ENCODE measurements at regions of chr14 and their contacts with region 1.

Region 1: DNA sequence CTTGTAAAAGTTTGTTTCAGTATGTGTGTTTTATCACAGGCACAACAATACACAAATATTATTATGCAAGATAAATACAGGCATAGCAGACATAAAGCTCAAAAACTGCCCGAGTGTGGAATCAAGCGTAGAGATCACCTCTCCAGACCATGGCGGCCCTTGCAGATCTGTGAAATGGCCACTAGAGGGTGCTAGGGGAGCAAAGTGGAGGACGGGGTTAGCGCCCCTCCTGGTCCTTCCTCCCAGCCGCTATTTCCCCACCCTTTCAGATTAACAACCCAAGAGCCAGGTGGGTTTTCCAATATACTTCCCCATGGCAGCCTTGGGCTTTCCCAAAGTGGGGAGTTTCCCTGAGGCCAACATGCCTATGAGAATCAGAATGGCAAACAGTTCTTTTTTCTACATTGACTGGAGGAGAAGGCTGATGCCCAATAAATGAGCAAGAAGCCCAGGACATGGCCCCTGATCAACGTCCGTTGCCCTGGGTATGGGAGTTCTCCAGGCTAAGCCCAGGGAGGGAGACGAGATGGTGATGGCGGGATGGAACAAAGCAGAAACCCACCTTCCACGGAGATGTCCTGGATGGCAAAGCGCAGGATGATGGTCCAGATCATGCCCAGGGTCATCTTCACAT is 67.4 kb downstream of the ACTN1 start:
- DNase-seq: peak; percentile 86
- ATAC-seq: peak; percentile 89
- H3K4me3 Mint-ChIP-seq: no peak overlapping the region
- H3K27ac Mint-ChIP-seq: peak overlapping the region; percentile 81
- H3K4me1 Mint-ChIP-seq: peaks cover 51% of the 10 kb centered on the region
- H3K27me3 Mint-ChIP-seq: no peaks in the 10 kb centered on the region
- CTCF ChIP-seq: peak; percentile 99

Region 2: GRCh38 chr14:68312884-68313610 is 598.7 kb before region 1 on chr14:
- CTCF ChIA-PET with region 1: no interaction called
- POLR2A ChIA-PET with region 1: no interaction called
- intact Hi-C with region 1: no loop called
- DNase-seq: peak; percentile 48
- ATAC-seq: peak; percentile 86
- H3K4me3 Mint-ChIP-seq: no peak overlapping the region
- H3K27ac Mint-ChIP-seq: no peak overlapping the region
- H3K4me1 Mint-ChIP-seq: peaks cover 23% of the 10 kb centered on the region
- H3K27me3 Mint-ChIP-seq: no peaks in the 10 kb centered on the region
- CTCF ChIP-seq: no peak

Region 3: GRCh38 chr14:68862954-68863594 is 48.6 kb before region 1 on chr14:
- CTCF ChIA-PET with region 1: interaction called, 12 read pairs
- POLR2A ChIA-PET with region 1: no interaction called
- intact Hi-C with region 1: no loop called
- DNase-seq: peak; percentile 90
- ATAC-seq: peak; percentile 56
- H3K4me3 Mint-ChIP-seq: no peak overlapping the region
- H3K27ac Mint-ChIP-seq: no peak overlapping the region
- H3K4me1 Mint-ChIP-seq: no peaks in the 10 kb centered on the region
- H3K27me3 Mint-ChIP-seq: no peaks in the 10 kb centered on the region
- CTCF ChIP-seq: peak; percentile 72

Region 4: DNA sequence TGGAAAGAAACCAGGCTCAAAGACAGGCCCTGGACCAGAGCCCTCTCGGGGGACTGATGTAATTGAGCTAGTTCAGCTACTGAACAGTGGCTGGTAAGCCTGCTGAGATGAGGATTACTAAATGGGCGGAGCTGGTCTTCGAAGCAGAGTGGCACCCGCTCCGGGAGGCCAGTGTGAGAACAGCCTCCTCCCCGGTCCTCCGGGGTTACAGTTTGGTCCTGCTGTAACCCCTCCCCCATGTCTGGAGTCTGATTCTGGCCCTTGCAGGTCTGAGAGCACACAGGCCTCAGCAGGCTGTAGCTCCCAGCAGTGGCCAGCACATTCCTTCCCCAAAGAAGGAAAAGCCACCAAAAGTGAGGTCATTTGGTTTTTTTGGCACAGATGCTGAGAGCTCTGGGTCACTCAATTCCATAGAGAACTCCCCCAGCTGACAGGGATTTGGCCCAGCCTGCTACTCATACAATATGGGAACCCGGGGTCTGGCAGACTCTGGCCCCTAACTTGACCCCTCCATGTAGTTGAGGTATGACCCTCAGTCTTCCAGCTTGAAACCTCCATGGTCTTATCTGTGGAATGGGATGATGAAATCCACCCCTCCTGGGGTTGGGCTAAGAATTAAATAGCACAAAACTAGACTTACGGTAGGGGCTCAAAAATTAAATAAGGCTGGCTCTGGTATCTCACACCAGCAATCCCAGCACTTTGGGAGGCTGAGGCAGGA is 28.3 kb after region 1 on chr14:
- CTCF ChIA-PET with region 1: interaction called, 11 read pairs
- POLR2A ChIA-PET with region 1: interaction called, 3 read pairs
- intact Hi-C with region 1: no loop called
- DNase-seq: peak; percentile 48
- ATAC-seq: peak; percentile 62
- H3K4me3 Mint-ChIP-seq: no peak overlapping the region
- H3K27ac Mint-ChIP-seq: peak overlapping the region; percentile 84
- H3K4me1 Mint-ChIP-seq: peaks cover 83% of the 10 kb centered on the region
- H3K27me3 Mint-ChIP-seq: no peaks in the 10 kb centered on the region
- CTCF ChIP-seq: no peak

Region 5: DNA sequence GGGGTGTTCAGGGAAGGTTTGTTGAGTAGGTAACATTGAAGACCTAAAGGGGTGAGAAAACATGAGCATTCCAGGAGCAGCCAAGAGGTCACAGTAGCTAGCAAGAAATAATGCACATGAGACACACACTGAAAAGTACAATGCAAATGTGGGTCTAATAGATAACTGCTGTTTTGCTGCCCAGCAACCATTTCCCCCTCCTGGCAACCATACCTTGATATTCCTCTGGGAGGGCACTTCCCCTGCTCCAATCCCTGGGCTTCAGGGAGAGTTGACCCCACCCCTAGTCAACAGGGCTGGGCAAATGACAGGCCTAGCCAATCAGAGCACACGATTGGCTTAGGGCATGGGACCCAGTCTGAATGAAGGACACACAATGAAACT is 75.9 kb after region 1 on chr14:
- CTCF ChIA-PET with region 1: interaction called, 29 read pairs
- POLR2A ChIA-PET with region 1: no interaction called
- intact Hi-C with region 1: loop called (anchors 5 kb)
- DNase-seq: no peak
- ATAC-seq: no peak
- H3K4me3 Mint-ChIP-seq: no peak overlapping the region
- H3K27ac Mint-ChIP-seq: peak overlapping the region; percentile 46
- H3K4me1 Mint-ChIP-seq: peaks cover 28% of the 10 kb centered on the region
- H3K27me3 Mint-ChIP-seq: no peaks in the 10 kb centered on the region
- CTCF ChIP-seq: no peak

Region 6: DNA sequence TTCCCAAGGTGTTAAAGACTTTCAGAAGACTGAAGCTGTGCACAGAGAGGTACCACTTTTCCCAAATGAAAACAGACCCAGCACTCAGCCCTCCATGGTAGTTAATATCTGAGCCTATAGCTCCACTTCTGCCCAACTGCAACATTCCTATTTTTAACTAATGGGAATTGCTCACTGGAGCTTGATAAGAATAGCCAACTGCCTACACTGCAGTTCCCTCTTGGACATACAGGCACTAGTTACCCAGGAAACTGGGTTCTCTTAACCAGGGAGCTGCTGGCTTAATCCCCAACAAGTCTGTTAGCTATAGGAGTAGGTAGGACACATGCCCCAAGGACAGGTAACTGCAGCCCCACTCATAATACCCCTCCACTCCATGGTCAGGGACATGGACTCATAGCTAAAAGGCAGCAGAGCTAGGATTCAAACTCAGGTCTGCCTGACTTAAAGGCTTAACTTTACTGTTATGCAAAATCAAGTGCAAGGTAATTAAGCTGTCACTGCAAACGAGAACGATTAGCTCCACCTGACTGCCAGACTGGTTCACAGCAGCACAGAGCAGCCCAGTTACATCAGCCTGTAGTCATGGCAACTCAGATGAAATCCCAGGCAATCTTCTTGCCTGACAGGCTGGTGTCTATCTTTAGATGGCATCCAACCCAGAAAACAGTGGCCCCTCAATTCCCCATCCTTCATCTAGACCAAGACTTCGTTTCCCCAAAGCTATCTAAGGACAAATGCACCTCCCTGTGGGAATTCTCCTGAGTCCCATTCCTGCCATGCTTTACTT is 144.5 kb after region 1 on chr14:
- CTCF ChIA-PET with region 1: interaction called, 16 read pairs
- POLR2A ChIA-PET with region 1: no interaction called
- intact Hi-C with region 1: no loop called
- DNase-seq: peak; percentile 42
- ATAC-seq: peak; percentile 57
- H3K4me3 Mint-ChIP-seq: no peak overlapping the region
- H3K27ac Mint-ChIP-seq: peak overlapping the region; percentile 32
- H3K4me1 Mint-ChIP-seq: peaks cover 18% of the 10 kb centered on the region
- H3K27me3 Mint-ChIP-seq: no peaks in the 10 kb centered on the region
- CTCF ChIP-seq: no peak

Region 7: GRCh38 chr14:69101331-69101826 is 189.7 kb after region 1 on chr14:
- CTCF ChIA-PET with region 1: interaction called, 49 read pairs
- POLR2A ChIA-PET with region 1: interaction called, 4 read pairs
- intact Hi-C with region 1: no loop called
- DNase-seq: peak; percentile 19
- ATAC-seq: peak; percentile 90
- H3K4me3 Mint-ChIP-seq: no peak overlapping the region
- H3K27ac Mint-ChIP-seq: peak overlapping the region; percentile 88
- H3K4me1 Mint-ChIP-seq: peaks cover 13% of the 10 kb centered on the region
- H3K27me3 Mint-ChIP-seq: no peaks in the 10 kb centered on the region
- CTCF ChIP-seq: peak; percentile 69